ENCODE measurements at regions of chr3 and their contacts with region 1.

Region 1: DNA sequence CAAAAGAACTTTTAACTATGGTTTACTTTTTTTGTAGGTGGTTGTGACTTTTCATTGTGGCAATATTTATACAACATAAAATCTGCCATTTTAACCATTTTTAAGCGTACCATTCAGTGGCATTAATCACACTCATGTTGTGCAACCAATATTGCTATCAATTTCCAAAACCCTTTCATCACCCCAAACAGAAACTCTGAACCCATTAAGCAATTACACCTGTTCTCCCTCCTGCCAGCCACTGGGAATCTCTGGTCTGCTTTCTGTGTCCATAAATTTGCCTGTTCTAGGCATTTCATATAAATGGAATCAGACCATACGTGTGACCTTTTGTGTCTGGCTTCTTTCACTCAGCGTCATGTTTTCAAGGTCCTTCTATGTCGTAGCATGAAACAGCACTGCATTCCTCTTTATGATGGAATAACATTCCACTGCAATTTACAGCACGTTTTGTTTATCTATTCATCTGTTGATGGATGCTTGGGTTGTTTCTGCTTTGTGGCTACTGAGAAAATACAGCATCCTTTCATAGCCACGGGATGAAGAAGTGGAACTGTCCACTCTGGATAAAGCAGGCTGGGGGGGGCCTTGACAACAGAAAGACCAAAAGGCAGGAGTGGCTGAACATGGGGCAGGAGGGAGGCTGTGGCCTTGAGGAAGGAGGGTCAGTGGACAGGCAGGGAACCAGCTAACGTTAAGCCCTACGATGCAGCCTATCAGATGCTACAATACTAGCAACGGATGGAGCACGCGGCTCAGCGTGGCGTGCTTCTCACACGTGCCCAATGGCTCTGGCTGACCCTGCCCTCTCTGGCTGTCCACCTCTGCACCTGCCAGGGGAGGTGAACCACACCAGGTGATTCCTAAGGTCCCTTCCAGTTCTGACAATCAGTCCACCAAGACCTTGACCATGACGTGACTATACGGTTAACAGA is 110.9 kb downstream of the SEC22A start:
- DNase-seq: no peak
- ATAC-seq: no peak

Region 2: GRCh38 chr3:123365450-123366143 is 53.0 kb after region 1 on chr3:
- intact Hi-C with region 1: loop called (anchors 1 kb)
- DNase-seq: no peak
- ATAC-seq: no peak

Measured in sciatic nerve (tissue), 2 donors.